Dendritic cell treated with granulocyte-macrophage colony-stimulating factor and Interleukin-4, amounts not matched to agents 40 ng/mL and 50 ng/mL, for 4 days (primary cell): ENCODE measurements at regions of chrX and their contacts with region 1.

Region 1: GRCh38 chrX:49922291-49923241 is at the start of gene CLCN5:
- H3K4me3 Mint-ChIP-seq: peak within 1 kb of the TSS; percentile 77
- H3K27ac Mint-ChIP-seq: peak within 1 kb of the TSS; percentile 85
- H3K4me1 Mint-ChIP-seq: peaks cover 26% of the 10 kb centered on the region
- H3K27me3 Mint-ChIP-seq: no peaks in the 10 kb centered on the region

Region 2: DNA sequence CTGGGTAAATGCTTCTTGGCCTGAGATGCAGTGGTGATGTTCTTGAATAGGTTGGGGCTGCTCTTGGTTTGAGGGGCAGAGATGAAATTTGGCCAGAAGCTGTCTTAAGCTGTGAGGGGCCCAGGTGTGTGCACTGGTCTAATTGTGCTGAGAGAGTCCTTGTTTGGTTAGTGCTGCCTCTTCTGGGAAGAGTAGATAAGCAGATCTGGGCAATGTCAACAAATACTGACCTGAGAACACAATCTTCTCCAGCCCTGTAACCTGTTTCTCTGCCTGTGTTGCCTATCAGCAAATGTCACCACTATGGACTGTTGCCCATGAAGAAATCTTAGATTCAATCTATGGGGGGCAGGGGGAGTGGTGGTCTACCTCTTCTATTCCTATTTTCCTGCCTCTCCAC is 60.5 kb before region 1 on chrX:
- intact Hi-C with region 1: no loop called
- H3K4me3 Mint-ChIP-seq: no peak overlapping the region
- H3K27ac Mint-ChIP-seq: no peak overlapping the region
- H3K4me1 Mint-ChIP-seq: no peaks in the 10 kb centered on the region
- H3K27me3 Mint-ChIP-seq: no peaks in the 10 kb centered on the region

Region 3: GRCh38 chrX:49901048-49901447 is 21.5 kb before region 1 on chrX:
- intact Hi-C with region 1: no loop called
- H3K4me3 Mint-ChIP-seq: no peak overlapping the region
- H3K27ac Mint-ChIP-seq: no peak overlapping the region
- H3K4me1 Mint-ChIP-seq: no peaks in the 10 kb centered on the region
- H3K27me3 Mint-ChIP-seq: peaks cover 6% of the 10 kb centered on the region

Region 4: DNA sequence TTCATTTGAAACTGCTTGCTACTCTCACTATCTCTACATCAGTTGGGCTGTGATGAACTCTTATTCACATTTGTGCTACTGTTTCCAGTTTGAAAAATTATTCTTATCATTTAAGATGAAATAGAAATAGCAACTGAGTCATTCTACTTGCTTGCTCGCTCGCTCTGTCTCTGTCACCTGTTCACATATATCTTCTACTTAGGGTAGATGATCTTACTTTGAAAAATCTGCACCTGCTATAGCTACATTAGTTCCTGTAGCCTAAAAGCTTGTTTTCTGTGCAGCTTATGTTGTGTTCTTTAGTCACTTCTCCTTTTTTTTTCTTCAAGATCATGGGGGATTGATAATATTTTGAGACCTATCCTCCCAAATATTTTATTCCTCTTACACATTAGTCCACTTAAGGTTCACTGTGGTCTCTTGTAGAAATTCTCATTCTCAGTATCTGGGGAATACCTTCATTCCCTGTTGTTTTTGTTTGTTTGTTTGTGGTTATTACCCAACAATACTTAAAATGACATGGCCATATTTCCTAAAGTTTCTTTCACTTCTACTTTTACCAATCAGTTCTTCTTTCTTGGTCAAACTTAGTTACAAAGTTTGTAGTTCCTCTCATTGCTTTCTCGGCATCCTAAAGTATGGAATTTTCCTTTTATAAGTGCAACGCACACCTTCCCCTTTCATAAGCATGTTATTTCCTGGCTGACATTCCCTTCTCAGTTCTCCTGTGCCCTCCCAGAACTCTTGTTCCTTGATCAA is 36.3 kb after region 1 on chrX:
- intact Hi-C with region 1: loop called (anchors 2 kb)
- H3K4me3 Mint-ChIP-seq: peak overlapping the region; percentile 4
- H3K27ac Mint-ChIP-seq: no peak overlapping the region
- H3K4me1 Mint-ChIP-seq: peaks cover 5% of the 10 kb centered on the region
- H3K27me3 Mint-ChIP-seq: no peaks in the 10 kb centered on the region

Region 5: GRCh38 chrX:49995021-49995731 is 72.6 kb after region 1 on chrX:
- intact Hi-C with region 1: loop called (anchors 5 kb)
- H3K4me3 Mint-ChIP-seq: no peak overlapping the region
- H3K27ac Mint-ChIP-seq: no peak overlapping the region
- H3K4me1 Mint-ChIP-seq: peaks cover 60% of the 10 kb centered on the region
- H3K27me3 Mint-ChIP-seq: no peaks in the 10 kb centered on the region

Region 6: DNA sequence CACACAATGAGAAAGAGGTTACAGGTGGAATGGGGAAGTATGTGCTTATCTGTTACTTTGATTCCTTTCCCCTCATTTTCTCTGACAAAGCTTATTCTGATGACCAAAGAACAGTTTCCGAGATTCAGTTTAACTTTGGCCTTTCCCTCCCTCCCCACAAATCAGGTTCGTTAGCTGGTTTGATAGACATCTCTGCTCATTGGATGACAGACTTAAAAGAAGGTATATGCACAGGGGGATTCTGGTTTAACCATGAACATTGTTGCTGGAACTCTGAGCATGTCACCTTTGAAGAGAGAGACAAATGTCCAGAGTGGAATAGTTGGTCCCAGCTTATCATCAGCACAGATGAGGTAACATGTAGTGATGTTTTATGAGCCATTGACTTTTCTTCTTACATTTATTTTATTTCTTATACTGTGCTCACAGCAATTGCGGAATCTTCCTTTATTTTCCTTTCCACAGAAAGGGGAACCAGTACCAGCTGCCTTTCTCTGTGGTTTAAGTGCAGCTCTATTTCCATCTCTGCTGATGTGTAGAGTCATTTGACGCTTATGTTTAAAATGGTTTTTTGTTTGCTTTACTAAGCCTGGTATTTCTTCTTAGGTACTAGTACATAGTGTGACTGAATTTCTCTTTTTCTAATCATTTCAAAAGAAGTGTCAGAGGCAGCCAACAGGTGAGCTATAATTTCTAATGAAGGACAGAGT is 153.2 kb after region 1 on chrX:
- intact Hi-C with region 1: loop called (anchors 2 kb)
- H3K4me3 Mint-ChIP-seq: no peak overlapping the region
- H3K27ac Mint-ChIP-seq: peak overlapping the region; percentile 89
- H3K4me1 Mint-ChIP-seq: peaks cover 70% of the 10 kb centered on the region
- H3K27me3 Mint-ChIP-seq: no peaks in the 10 kb centered on the region